Transverse colon (tissue), 4 donors: ENCODE measurements at regions of chr11 and their contacts with region 1.

Region 1: DNA sequence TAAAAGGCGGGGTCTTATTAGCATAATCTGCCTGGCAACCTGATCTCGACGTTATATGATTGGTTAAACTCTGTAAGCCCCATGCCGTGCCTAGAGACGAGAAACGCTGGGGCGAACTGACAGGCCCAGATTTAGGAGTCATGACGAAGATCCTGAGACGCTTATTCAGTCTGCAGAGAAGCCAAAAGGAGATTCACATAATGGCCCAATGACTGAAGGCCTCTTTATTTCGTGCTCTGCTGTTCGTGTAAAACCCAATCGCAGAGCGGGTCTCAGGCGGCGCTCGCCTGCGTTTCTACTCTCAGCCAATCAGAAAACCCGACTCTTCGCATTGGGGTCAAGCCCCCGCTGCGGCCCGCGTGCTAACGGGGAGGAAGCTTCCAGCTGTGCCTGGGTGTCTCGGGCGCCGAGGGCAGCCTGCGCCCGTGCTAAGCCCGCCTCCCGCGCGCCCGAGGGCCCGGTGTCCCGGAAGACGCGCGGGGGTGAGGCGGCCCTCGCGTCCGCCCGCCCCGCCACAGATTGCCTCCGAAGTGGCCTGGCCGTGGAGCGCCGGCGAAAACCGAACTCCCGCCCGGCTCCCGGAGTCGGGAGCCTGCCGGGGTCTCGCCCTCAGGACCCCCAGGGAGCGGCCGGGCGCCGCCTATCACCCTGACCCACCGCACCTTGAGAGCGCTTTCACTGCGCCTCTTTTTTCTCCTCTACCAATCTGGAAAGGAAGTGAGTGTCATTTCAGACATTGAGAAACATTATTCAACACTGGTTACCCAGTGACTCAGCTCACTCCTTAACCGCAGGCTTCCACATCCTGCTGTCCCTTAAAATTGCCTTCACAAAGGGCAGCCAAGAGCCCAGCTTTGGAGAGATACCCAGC is 446 bp upstream of the PRDM10 start:
- DNase-seq: peak; percentile 94
- H3K4me3 ChIP-seq: peak overlapping the region; percentile 58 to 84 (median 76)
- H3K27ac ChIP-seq: peak overlapping the region; percentile 99 to 100 (median 100)
- H3K4me1 ChIP-seq: peaks cover 20 to 41% (median 36%) of the 10 kb centered on the region in 4 donors
- H3K27me3 ChIP-seq: no peaks in the 10 kb centered on the region
- CTCF ChIP-seq: no peak
- EP300 ChIP-seq: no peak
- POLR2A ChIP-seq: peak; percentile 81

Region 2: GRCh38 chr11:129989149-129989813 is 13.8 kb before region 1 on chr11:
- in situ Hi-C with region 1: no loop called
- intact Hi-C with region 1: no loop called
- DNase-seq: no peak
- H3K4me3 ChIP-seq: no peak overlapping the region
- H3K27ac ChIP-seq: peak overlapping the region; percentile 27 to 61 (median 40)
- H3K4me1 ChIP-seq: peaks cover 7 to 34% (median 17%) of the 10 kb centered on the region in 4 donors
- H3K27me3 ChIP-seq: no peaks in the 10 kb centered on the region
- CTCF ChIP-seq: no peak
- EP300 ChIP-seq: no peak
- POLR2A ChIP-seq: no peak

Region 3: DNA sequence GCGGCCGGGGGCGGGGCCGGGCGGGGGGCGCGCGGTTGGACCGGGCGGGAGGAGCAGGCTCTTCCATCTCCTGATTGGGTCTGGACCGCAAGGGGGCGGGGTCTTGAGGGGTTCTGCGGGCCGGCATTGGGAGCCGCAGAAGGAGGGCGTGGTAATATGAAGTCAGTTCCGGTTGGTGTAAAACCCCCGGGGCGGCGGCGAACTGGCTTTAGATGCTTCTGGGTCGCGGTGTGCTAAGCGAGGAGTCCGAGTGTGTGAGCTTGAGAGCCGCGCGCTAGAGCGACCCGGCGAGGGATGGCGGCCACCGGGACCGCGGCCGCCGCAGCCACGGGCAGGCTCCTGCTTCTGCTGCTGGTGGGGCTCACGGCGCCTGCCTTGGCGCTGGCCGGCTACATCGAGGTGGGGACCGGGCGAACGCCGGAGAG is 66.6 kb after region 1 on chr11 and contains the start of gene APLP2:
- in situ Hi-C with region 1: loop called in 3 of 4 experiments (anchors 10 kb)
- intact Hi-C with region 1: loop called (anchors 2 kb)
- DNase-seq: peak; percentile 100
- H3K4me3 ChIP-seq: peak within 1 kb of the TSS; percentile 74 to 92 (median 82)
- H3K27ac ChIP-seq: peak within 1 kb of the TSS; percentile 94 to 97 (median 96)
- H3K4me1 ChIP-seq: peaks cover 11 to 49% (median 29%) of the 10 kb centered on the region in 4 donors
- H3K27me3 ChIP-seq: no peaks in the 10 kb centered on the region
- CTCF ChIP-seq: no peak
- EP300 ChIP-seq: no peak
- POLR2A ChIP-seq: peak; percentile 97
- total RNA-seq, gene APLP2: 191 to 618 (median 396) TPM

Region 4: GRCh38 chr11:130124096-130124495 is 121.0 kb after region 1 on chr11:
- in situ Hi-C with region 1: no loop called
- intact Hi-C with region 1: loop called (anchors 10 kb)
- DNase-seq: peak; percentile 28
- H3K4me3 ChIP-seq: no peak overlapping the region
- H3K27ac ChIP-seq: peak overlapping the region; percentile 12 to 53 (median 52)
- H3K4me1 ChIP-seq: peaks cover 0 to 8% (median 2%) of the 10 kb centered on the region in 4 donors
- H3K27me3 ChIP-seq: no peaks in the 10 kb centered on the region
- CTCF ChIP-seq: no peak
- EP300 ChIP-seq: no peak
- POLR2A ChIP-seq: no peak